ENCODE measurements at regions of chr2 and their contacts with region 1.

Region 1: DNA sequence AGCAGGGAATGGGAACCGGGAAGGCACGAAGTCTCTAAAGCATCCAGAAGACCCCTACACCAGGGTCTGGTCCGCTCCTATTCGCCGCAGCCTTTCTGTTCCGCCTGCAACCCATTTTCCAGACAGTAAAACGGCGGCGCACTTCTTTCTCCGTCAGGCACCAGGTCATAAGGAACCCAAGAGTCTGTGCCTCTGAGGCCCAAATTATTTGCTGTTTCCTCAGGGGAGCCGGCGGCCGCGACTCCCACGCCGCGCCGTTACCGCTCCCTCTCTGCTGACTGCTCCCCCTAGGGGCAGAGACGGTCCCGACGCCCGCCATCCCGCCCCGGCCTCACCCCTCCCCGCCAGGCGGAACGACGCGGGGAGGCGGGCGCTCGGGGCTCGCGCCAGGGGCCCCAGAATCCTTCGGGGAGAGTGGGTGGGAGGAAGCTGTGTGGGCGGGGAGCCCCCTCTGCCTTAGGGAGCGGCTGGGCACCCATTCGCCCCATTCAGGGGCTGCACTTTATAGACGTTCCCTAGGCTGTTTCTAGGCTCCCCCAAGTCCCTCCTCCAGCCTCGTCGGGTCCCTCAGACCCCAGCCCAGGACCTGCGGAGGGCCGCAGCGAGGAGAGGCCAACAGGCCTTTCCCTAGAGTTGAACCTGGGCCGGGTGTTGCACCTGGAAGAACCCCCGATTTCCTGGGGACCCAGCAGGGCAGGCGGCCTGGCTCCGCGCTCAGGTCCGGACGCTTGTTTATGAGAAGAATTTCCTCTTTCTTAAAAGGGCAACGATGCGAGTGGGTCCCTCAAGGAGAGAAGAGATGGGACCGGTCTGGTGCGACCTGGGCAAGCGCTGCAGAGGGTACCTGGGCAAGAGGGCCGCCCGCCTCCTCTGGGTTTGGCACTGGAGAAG is 3.6 kb upstream of the CTDSP1 start:
- DNase-seq: peak; percentile 94 to 98
- ATAC-seq: peak; percentile 68 to 84 (median 74)
- H3K4me3 ChIP-seq: peak overlapping the region; percentile 91
- H3K27ac ChIP-seq: peak overlapping the region; percentile 99
- H3K4me1 ChIP-seq: peaks cover 13% of the 10 kb centered on the region
- H3K27me3 ChIP-seq: no peaks in the 10 kb centered on the region
- CTCF ChIP-seq: peak; percentile 87

Region 2: GRCh38 chr2:218186355-218186766 is 209.7 kb before region 1 on chr2:
- intact Hi-C with region 1: loop called (anchors 10 kb)
- DNase-seq: peak; percentile 53 to 69
- ATAC-seq: peak; percentile 89 to 97 (median 94)
- H3K4me3 ChIP-seq: no peak overlapping the region
- H3K27ac ChIP-seq: peak overlapping the region; percentile 23
- H3K4me1 ChIP-seq: peaks cover 14% of the 10 kb centered on the region
- H3K27me3 ChIP-seq: no peaks in the 10 kb centered on the region
- CTCF ChIP-seq: peak; percentile 68

Region 3: GRCh38 chr2:218269899-218270720 is 125.9 kb before region 1 on chr2 and contains the starts of genes AAMP and PNKD:
- intact Hi-C with region 1: loop called in 1 of 2 experiments (anchors 2 kb)
- DNase-seq: peak; percentile 100
- ATAC-seq: peak; percentile 91 to 95 (median 93)
- H3K4me3 ChIP-seq: peak within 1 kb of the TSS; percentile 88
- H3K27ac ChIP-seq: peak within 1 kb of the TSS; percentile 91
- H3K4me1 ChIP-seq: peaks cover 40% of the 10 kb centered on the region
- H3K27me3 ChIP-seq: no peaks in the 10 kb centered on the region
- CTCF ChIP-seq: no peak
- total RNA-seq, gene AAMP: 52.7 to 70.6 (median 62.5) TPM
- total RNA-seq, gene PNKD: 31.5 to 54.5 (median 41.0) TPM

Region 4: GRCh38 chr2:218292048-218293014 is 103.7 kb before region 1 on chr2 and contains the start of gene TMBIM1:
- intact Hi-C with region 1: loop called in 1 of 2 experiments (anchors 5 kb)
- DNase-seq: peak; percentile 88 to 92
- ATAC-seq: peak; percentile 88 to 95 (median 93)
- H3K4me3 ChIP-seq: peak within 1 kb of the TSS; percentile 93
- H3K27ac ChIP-seq: peak within 1 kb of the TSS; percentile 96
- H3K4me1 ChIP-seq: peaks cover 39% of the 10 kb centered on the region
- H3K27me3 ChIP-seq: no peaks in the 10 kb centered on the region
- CTCF ChIP-seq: peak; percentile 96
- total RNA-seq, gene TMBIM1: 152 to 197 (median 157) TPM

Region 5: GRCh38 chr2:218301176-218301819 is 94.7 kb before region 1 on chr2:
- intact Hi-C with region 1: loop called in 1 of 2 experiments (anchors 1 kb)
- DNase-seq: peak; percentile 69 to 83
- ATAC-seq: peak; percentile 82 to 94 (median 84)
- H3K4me3 ChIP-seq: no peak overlapping the region
- H3K27ac ChIP-seq: no peak overlapping the region
- H3K4me1 ChIP-seq: no peaks in the 10 kb centered on the region
- H3K27me3 ChIP-seq: no peaks in the 10 kb centered on the region
- CTCF ChIP-seq: peak; percentile 97

Region 6: DNA sequence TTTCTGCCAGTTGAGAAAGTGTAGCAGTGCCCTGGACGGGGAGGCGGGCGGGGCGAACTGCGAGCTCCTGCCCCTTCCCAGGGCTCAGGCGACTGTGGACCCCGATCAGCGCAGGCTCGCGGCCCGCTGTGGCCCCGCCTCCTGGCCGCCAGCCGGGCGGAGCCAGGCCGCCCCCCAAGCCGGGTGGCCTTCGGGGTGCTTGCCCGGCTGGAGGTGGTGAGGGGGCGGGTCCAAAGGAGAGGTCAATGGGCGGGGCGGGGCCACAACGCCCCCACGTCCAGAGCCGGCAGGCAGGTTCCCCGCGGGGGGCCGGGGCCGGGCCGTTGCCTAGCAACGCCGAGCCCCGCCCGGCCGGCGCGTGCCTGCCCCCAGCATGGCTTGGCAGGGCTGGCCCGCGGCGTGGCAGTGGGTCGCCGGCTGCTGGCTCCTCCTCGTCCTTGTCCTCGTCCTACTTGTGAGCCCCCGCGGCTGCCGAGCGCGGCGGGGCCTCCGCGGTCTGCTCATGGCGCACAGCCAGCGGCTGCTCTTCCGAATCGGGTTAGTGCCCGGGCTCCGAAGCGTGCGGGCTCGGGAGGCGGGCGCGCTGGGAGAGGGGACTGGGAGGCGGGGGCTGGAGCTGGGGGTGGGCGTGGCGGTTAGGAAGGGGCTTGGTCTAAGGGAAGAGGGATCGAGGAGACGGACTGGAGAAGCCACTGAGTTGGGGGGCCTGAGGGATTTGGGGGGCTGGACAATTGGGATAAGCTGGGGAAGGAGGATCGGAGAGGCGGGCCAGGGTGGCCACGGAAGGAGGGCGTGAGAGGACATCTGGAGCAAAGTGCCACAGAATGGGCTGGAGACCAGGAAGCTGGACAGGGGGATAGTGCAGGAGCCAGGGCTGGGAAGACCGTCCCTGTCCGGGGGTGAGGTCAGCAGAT is 72.9 kb before region 1 on chr2:
- intact Hi-C with region 1: no loop called
- DNase-seq: peak; percentile 71 to 79
- ATAC-seq: peak; percentile 67 to 86 (median 76)
- H3K4me3 ChIP-seq: peak overlapping the region; percentile 82
- H3K27ac ChIP-seq: peak overlapping the region; percentile 44
- H3K4me1 ChIP-seq: peaks cover 3% of the 10 kb centered on the region
- H3K27me3 ChIP-seq: no peaks in the 10 kb centered on the region
- CTCF ChIP-seq: no peak

Region 7: GRCh38 chr2:219177552-219178376 is 781.7 kb after region 1 on chr2 and contains the start of gene RETREG2:
- intact Hi-C with region 1: loop called in 1 of 2 experiments (anchors 10 kb)
- DNase-seq: peak; percentile 87 to 93
- ATAC-seq: peak; percentile 77 to 87 (median 80)
- H3K4me3 ChIP-seq: peak within 1 kb of the TSS; percentile 100
- H3K27ac ChIP-seq: peak within 1 kb of the TSS; percentile 87
- H3K4me1 ChIP-seq: peaks cover 31% of the 10 kb centered on the region
- H3K27me3 ChIP-seq: no peaks in the 10 kb centered on the region
- CTCF ChIP-seq: peak; percentile 44
- total RNA-seq, gene RETREG2: 28.1 to 38.1 (median 37.1) TPM

Measured in psoas muscle (tissue), 8 donors.